ENCODE measurements at regions of chrX and their contacts with region 1.

Region 1: GRCh38 chrX:23694606-23695005 is 27.3 kb downstream of the PRDX4 start:
- DNase-seq: peak in 1 of 2 donors; percentile 49
- ATAC-seq: peak in 3 of 8 donors; percentile 48 to 58 (median 53)
- H3K4me3 ChIP-seq: no peak overlapping the region
- H3K27ac ChIP-seq: no peak overlapping the region
- H3K4me1 ChIP-seq: peaks cover 0 to 3% (median 0%) of the 10 kb centered on the region in 9 donors
- H3K27me3 ChIP-seq: peaks cover 0 to 7% (median 0%) of the 10 kb centered on the region in 7 donors
- CTCF ChIP-seq: peak; percentile 16 to 66 (median 52)

Region 2: GRCh38 chrX:24063488-24063887 is 368.9 kb after region 1 on chrX:
- intact Hi-C with region 1: loop called in 1 of 10 experiments (anchors 10 kb)
- DNase-seq: no peak
- ATAC-seq: no peak
- H3K4me3 ChIP-seq: no peak overlapping the region
- H3K27ac ChIP-seq: no peak overlapping the region
- H3K4me1 ChIP-seq: no peaks in the 10 kb centered on the region
- H3K27me3 ChIP-seq: no peaks in the 10 kb centered on the region
- CTCF ChIP-seq: no peak

Measured in heart right ventricle (tissue), 16 donors.